Heart right ventricle (tissue), 16 donors: ENCODE measurements at regions of chr3 and their contacts with region 1.

Region 1: DNA sequence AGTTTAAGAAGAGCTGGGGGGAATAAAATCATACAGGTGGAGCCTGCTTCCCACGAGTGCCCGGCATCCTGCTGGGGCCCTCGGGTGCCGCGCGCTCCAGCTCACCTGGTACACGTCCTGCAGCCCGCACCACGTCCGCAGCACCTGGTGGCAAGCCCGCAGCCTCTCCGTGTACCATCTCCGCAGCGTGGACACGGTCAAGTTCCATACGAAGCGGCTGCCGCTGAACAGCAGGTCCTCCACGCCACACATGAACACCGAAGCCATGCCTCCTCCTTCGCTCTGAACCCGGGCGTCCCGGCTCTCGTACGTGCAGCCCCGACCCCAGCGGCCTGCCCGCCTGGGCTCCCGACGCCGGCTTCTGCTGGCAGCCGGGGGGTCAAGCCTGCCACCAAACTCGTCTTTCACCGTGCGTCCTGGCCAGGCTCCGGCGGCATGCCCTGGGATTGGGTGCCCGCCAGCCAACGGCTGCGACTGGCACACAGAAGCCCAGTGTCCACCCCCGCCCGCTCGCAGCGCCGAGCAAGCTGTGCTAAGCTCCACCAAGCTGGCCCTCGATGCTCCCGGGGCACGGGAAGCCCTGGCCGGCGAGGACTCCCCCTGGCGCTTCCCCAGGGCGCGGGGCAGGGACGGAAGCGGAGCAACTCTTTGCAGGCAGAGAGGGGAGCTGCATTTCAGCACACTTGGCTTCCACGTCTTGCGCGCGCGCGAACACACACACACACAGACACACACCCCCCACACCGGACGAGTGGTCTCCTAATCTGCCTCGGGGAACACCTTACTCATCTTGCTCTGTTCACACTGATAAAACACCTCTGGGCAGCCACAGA is at the start of gene FRMD4B:
- DNase-seq: peak; percentile 74 to 85
- ATAC-seq: peak; percentile 80 to 97 (median 92)
- H3K4me3 ChIP-seq: peak within 1 kb of the TSS; percentile 47 to 78 (median 65)
- H3K27ac ChIP-seq: peak within 1 kb of the TSS; percentile 60 to 88 (median 78)
- H3K4me1 ChIP-seq: peaks cover 0 to 53% (median 25%) of the 10 kb centered on the region in 9 donors
- H3K27me3 ChIP-seq: peaks cover 0 to 28% (median 0%) of the 10 kb centered on the region in 7 donors
- CTCF ChIP-seq: peak in 8 of 9 donors; percentile 10 to 55 (median 40)
- total RNA-seq, gene FRMD4B: 9.5 to 31.0 (median 17.7) TPM

Region 2: GRCh38 chr3:68771683-68772082 is 614.3 kb before region 1 on chr3:
- intact Hi-C with region 1: no loop called
- DNase-seq: no peak
- ATAC-seq: no peak
- H3K4me3 ChIP-seq: no peak overlapping the region
- H3K27ac ChIP-seq: no peak overlapping the region
- H3K4me1 ChIP-seq: no peaks in the 10 kb centered on the region
- H3K27me3 ChIP-seq: peaks cover 0 to 3% (median 0%) of the 10 kb centered on the region in 7 donors
- CTCF ChIP-seq: no peak

Region 3: DNA sequence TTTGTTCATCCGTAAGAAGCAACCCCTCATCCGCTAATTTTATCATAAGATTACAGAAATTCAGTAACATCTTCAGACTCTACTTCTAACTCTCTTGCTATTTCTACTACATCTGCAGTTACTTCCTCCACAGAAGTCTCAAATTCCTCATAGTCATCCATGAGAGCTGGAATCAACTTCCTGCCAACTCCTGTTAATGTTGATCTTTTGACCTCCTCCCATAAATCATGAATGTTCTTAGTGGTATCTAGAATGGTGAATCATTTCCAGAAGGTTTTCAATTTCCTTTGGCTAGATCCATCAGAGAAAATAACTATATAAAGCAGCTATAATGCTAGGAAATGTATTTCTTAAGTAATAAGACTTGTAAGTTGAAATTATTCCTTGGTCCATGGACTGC is 568.7 kb before region 1 on chr3:
- intact Hi-C with region 1: no loop called
- DNase-seq: no peak
- ATAC-seq: no peak
- H3K4me3 ChIP-seq: no peak overlapping the region
- H3K27ac ChIP-seq: no peak overlapping the region
- H3K4me1 ChIP-seq: no peaks in the 10 kb centered on the region
- H3K27me3 ChIP-seq: no peaks in the 10 kb centered on the region
- CTCF ChIP-seq: no peak

Region 4: GRCh38 chr3:69324362-69325025 is 61.4 kb before region 1 on chr3:
- intact Hi-C with region 1: loop called in 1 of 10 experiments (anchors 5 kb)
- DNase-seq: no peak
- ATAC-seq: peak in 2 of 8 donors; percentile 59 to 63
- H3K4me3 ChIP-seq: no peak overlapping the region
- H3K27ac ChIP-seq: peak overlapping the region in 3 of 10 donors; percentile 41 to 82 (median 54)
- H3K4me1 ChIP-seq: peaks cover 0 to 99% (median 67%) of the 10 kb centered on the region in 9 donors
- H3K27me3 ChIP-seq: no peaks in the 10 kb centered on the region
- CTCF ChIP-seq: peak in 8 of 9 donors; percentile 30 to 66 (median 54)

Region 5: GRCh38 chr3:69330891-69331400 is 55.0 kb before region 1 on chr3:
- intact Hi-C with region 1: loop called in 1 of 10 experiments (anchors 5 kb)
- DNase-seq: peak in 1 of 2 donors; percentile 57
- ATAC-seq: peak; percentile 63 to 87 (median 82)
- H3K4me3 ChIP-seq: no peak overlapping the region
- H3K27ac ChIP-seq: peak overlapping the region; percentile 5 to 88 (median 70)
- H3K4me1 ChIP-seq: peaks cover 0 to 75% (median 57%) of the 10 kb centered on the region in 9 donors
- H3K27me3 ChIP-seq: no peaks in the 10 kb centered on the region
- CTCF ChIP-seq: no peak

Region 6: GRCh38 chr3:69370156-69370883 is 15.6 kb before region 1 on chr3:
- intact Hi-C with region 1: loop called in 1 of 10 experiments (anchors 2 kb)
- DNase-seq: peak; percentile 82 to 84
- ATAC-seq: peak; percentile 89 to 97 (median 94)
- H3K4me3 ChIP-seq: peak overlapping the region in 5 of 10 donors; percentile 14 to 30 (median 15)
- H3K27ac ChIP-seq: peak overlapping the region; percentile 30 to 89 (median 76)
- H3K4me1 ChIP-seq: peaks cover 0 to 52% (median 31%) of the 10 kb centered on the region in 9 donors
- H3K27me3 ChIP-seq: no peaks in the 10 kb centered on the region
- CTCF ChIP-seq: no peak

Region 7: DNA sequence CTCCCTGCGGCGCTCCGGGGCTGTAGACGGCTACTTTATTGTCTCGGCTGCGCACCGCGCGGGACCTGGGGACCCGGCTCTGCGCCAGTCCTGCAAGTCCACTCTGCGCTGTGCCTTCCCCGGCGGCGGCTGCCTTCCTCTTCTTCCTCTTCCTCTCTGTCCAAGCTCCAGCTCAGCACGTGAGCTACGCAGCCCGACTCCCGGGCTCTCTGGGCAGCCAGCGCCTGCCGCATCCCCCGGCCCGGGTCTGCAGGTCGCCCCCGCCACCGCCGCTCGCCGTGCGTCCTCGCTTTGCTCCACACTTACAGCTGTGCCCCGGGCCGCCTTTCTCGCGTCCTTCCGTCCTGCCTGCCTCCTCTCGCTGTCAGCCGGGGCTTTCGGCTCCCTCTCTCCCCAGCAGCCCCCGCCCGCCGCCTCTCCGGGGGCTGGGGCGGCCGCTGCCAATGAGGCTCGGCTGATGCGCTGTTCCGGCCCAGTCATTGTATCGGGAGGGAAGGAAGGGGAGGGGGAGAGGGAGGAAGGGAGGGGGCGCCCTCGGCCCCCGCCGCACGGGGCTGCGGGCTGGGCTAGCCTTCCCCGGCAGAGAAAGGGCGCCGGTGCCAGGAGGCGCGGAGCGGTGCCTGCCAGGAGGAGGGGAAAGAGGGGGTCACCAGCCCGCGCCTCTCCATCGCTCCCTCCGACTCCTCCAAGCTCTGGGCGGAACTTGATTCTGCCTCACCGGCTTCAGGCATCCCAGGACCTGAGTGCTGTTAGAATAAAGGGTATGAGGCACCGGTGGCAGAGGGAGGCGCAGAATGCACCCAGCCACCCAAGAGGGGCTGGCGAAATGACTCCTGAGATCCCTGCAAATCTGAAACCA is 156.5 kb after region 1 on chr3:
- intact Hi-C with region 1: no loop called
- DNase-seq: peak in 1 of 2 donors; percentile 35
- ATAC-seq: peak; percentile 47 to 87 (median 68)
- H3K4me3 ChIP-seq: peak overlapping the region; percentile 41 to 81 (median 67)
- H3K27ac ChIP-seq: peak overlapping the region in 8 of 10 donors; percentile 2 to 72 (median 54)
- H3K4me1 ChIP-seq: peaks cover 0 to 35% (median 14%) of the 10 kb centered on the region in 9 donors
- H3K27me3 ChIP-seq: peaks cover 0 to 35% (median 13%) of the 10 kb centered on the region in 7 donors
- CTCF ChIP-seq: no peak